ENCODE measurements at regions of chr5 and their contacts with region 1.

Region 1: GRCh38 chr5:178279725-178280438 is 47.3 kb upstream of the PHYKPL start:
- DNase-seq: peak; percentile 85
- ATAC-seq: peak; percentile 94
- H3K4me3 ChIP-seq: no peak overlapping the region
- H3K27ac ChIP-seq: no peak overlapping the region
- H3K4me1 ChIP-seq: no peaks in the 10 kb centered on the region
- H3K27me3 ChIP-seq: peaks cover 27% of the 10 kb centered on the region
- CTCF ChIP-seq: peak; percentile 98

Region 2: DNA sequence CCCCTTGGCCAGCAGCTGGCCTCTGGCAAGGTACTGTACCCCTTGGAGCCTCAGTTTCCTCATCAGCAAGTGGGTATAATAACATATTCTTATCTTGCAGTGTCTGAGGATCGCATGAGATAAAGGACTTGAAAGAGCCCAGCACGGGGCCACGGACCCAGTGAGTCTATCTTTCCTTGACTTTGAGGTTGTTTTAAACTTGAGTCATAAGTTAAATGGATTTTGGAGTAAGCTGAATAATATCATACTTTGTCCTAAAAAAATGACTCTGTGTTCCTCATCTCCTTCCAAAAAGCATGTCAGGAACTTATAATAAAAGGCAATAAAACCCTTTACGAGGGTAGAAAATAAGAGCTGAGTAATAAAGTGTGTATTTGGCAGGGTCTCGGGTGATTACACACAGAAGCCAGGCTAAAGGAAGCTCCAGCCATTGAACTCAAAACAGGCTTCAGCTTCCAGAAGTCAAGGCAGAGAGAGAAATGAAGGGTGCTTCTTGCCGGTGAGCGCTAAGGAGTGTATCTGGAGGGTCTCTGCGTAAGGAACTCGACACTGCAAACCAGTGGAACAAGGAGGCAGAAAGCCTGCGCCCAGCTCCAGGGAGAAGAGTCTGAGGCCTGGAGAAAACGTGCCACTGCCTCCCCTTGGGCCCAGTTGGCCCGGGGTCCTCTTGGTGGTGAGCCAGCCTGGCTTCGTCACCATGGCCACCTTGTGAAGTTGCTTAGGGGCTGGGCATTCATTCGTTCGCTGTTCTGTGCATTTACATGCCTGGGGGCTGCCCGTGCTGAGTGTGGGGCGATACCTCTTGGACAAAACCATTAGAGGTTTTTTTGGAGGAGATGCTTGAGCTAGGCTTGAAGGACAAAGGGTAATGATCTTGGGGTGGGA is 25.1 kb after region 1 on chr5:
- CTCF ChIA-PET with region 1: no interaction called
- POLR2A ChIA-PET with region 1: no interaction called
- intact Hi-C with region 1: no loop called
- DNase-seq: peak; percentile 82
- ATAC-seq: peak; percentile 85
- H3K4me3 ChIP-seq: no peak overlapping the region
- H3K27ac ChIP-seq: peak overlapping the region; percentile 58
- H3K4me1 ChIP-seq: peaks cover 16% of the 10 kb centered on the region
- H3K27me3 ChIP-seq: no peaks in the 10 kb centered on the region
- CTCF ChIP-seq: no peak

Region 3: DNA sequence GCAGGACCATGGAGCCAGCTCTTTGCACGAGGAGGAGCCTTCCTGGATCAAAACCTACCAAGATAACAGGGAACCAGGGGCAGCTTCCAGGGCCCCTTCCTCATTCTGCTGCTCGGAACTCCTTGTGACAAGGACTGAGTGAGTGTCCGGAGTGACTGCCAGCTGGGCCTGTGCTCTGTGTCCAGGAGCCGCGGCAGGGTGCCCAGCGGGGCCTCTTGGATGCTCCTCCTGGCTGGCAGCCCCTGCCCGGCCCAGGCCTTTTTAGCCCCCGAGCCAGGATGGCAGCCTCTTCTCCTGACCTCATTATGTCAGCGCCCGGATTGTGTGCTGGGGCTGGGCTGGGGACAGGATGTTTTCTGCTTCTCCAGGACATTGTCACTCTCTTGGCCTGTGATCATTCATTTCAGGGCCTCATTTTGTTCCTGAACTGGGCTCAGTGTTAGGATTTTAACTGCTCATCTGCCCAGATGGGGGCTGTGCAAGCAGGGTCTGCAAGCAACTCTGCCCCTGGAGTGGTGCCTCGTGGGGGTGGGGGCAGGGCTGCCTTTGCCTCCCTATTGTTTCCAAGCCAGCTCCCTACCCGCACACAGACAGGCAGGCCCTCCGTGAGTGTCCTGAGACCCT is 148.6 kb after region 1 on chr5:
- CTCF ChIA-PET with region 1: no interaction called
- POLR2A ChIA-PET with region 1: no interaction called
- intact Hi-C with region 1: no loop called
- DNase-seq: no peak
- ATAC-seq: no peak
- H3K4me3 ChIP-seq: no peak overlapping the region
- H3K27ac ChIP-seq: no peak overlapping the region
- H3K4me1 ChIP-seq: no peaks in the 10 kb centered on the region
- H3K27me3 ChIP-seq: peaks cover 22% of the 10 kb centered on the region
- CTCF ChIP-seq: no peak

Region 4: GRCh38 chr5:178467568-178468195 is 187.8 kb after region 1 on chr5:
- CTCF ChIA-PET with region 1: no interaction called
- POLR2A ChIA-PET with region 1: no interaction called
- intact Hi-C with region 1: loop called (anchors 5 kb)
- DNase-seq: peak; percentile 59
- ATAC-seq: peak; percentile 92
- H3K4me3 ChIP-seq: peak overlapping the region; percentile 49; the same call in 1 of the 2 replicates
- H3K27ac ChIP-seq: peak overlapping the region; percentile 32; the same call in 1 of the 2 replicates
- H3K4me1 ChIP-seq: peaks cover 18% of the 10 kb centered on the region
- H3K27me3 ChIP-seq: no peaks in the 10 kb centered on the region
- CTCF ChIP-seq: no peak

Region 5: DNA sequence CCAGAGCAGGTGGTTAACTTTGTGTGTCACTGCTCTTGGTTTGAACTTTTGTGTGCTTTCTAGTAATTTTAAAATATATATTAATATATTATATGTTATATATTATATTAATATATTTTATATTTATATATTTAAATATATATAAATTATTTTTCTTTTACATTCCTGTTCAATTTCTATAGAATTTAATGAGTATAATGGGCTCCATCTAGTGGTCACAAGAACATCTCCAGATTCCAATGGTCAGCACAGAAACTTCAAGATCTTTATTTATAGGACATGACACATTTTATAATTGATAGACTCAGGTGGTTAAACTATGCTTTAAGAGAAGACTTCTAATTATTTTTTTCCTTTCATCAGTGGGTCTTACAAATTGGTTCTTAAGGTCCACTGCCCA is 271.2 kb after region 1 on chr5:
- CTCF ChIA-PET with region 1: interaction called, 7 read pairs
- POLR2A ChIA-PET with region 1: no interaction called
- intact Hi-C with region 1: loop called (anchors 1 kb)
- DNase-seq: peak; percentile 60
- ATAC-seq: no peak
- H3K4me3 ChIP-seq: no peak overlapping the region
- H3K27ac ChIP-seq: no peak overlapping the region
- H3K4me1 ChIP-seq: no peaks in the 10 kb centered on the region
- H3K27me3 ChIP-seq: peaks cover 29% of the 10 kb centered on the region
- CTCF ChIP-seq: peak; percentile 53

Region 6: DNA sequence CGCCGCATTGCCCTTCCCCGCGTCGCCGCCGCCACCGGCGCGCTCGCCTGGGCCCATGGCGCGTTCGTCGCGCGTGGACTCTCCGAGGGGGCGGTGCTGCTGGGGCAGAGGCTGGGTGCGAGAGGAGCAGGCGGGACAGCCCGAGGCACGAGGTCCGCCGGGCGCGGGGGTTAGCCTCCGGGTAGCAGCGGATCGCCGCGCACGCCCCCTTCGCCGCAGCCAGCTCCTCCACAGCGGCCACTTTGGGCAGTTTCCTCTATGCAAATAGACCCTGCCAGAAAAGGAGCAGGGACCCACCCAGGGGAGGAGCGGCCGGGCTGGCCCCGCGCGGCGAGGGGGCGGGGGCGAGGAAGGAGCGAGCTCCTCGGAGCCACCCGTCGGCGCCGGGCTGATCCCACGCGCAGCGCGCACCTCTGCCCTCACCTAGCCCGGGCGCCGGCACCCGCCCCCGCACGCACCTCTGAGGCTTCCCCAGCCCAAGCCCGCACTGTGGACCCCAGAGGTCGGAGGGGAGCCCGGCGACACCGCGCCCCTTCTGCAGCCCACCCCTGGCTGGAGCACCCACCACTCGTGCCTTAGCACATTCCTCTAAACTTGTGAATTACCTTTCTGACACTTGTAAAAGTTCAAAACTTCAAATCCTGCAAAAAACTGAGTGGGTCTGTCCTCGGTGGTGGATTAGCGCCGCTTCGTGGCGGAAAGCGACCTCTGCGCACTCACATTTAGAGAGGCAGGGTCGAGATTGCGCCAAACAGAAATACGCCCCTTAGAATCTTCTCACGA is 310.4 kb after region 1 on chr5 and contains the start of gene COL23A1:
- CTCF ChIA-PET with region 1: no interaction called
- POLR2A ChIA-PET with region 1: no interaction called
- intact Hi-C with region 1: loop called (anchors 2 kb)
- DNase-seq: peak; percentile 40
- ATAC-seq: peak; percentile 33
- H3K4me3 ChIP-seq: peak within 1 kb of the TSS; percentile 47; the same call in 1 of the 2 replicates
- H3K27ac ChIP-seq: no peak within 1 kb of the TSS
- H3K4me1 ChIP-seq: no peaks in the 10 kb centered on the region; the same call in 1 of the 2 replicates
- H3K27me3 ChIP-seq: peaks cover 44% of the 10 kb centered on the region
- CTCF ChIP-seq: peak; percentile 85
- total RNA-seq, gene COL23A1: not detected in 2 replicates

Region 7: DNA sequence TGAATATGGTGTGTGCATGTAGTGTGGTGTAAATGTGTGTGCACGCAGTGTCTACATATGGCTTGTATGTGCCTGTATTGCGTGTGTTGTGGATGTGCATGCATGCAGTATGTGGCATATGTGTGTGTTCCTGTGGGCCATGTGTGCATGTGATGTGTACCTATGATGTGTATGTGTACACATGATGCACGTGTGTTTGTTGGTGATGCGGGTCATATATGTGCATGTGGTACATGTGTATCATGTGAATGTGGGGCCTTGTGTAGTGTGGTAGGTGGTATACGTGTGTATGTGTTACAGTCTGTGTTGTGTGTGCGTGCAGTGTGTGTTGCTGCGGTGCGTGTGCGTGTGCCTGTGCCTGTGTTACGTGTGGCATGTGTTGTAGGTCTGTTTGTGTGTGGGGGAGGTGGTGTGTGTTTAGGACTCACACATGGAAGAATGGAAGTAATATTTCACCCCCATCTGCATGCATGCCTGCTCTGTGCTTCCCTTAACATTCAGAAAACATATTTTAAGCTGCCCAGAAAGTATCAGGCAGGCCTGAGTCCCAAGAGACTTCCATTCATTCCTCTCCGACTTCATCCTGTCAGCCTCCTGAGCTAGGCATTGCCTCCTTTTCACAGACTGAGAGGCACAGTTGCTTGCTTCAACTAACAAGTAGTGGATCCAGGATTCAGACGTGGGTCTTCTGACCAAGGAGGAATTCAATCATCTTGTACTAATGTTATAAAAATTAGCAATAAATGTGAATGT is 1215.1 kb after region 1 on chr5:
- CTCF ChIA-PET with region 1: no interaction called
- POLR2A ChIA-PET with region 1: no interaction called
- intact Hi-C with region 1: loop called (anchors 5 kb)
- DNase-seq: no peak
- ATAC-seq: no peak
- H3K4me3 ChIP-seq: no peak overlapping the region
- H3K27ac ChIP-seq: no peak overlapping the region
- H3K4me1 ChIP-seq: no peaks in the 10 kb centered on the region
- H3K27me3 ChIP-seq: no peaks in the 10 kb centered on the region
- CTCF ChIP-seq: no peak

Measured in PC-3 (cell line).